HEK293T (cell line): ENCODE measurements at regions of chr5 and their contacts with region 1.

Region 1: DNA sequence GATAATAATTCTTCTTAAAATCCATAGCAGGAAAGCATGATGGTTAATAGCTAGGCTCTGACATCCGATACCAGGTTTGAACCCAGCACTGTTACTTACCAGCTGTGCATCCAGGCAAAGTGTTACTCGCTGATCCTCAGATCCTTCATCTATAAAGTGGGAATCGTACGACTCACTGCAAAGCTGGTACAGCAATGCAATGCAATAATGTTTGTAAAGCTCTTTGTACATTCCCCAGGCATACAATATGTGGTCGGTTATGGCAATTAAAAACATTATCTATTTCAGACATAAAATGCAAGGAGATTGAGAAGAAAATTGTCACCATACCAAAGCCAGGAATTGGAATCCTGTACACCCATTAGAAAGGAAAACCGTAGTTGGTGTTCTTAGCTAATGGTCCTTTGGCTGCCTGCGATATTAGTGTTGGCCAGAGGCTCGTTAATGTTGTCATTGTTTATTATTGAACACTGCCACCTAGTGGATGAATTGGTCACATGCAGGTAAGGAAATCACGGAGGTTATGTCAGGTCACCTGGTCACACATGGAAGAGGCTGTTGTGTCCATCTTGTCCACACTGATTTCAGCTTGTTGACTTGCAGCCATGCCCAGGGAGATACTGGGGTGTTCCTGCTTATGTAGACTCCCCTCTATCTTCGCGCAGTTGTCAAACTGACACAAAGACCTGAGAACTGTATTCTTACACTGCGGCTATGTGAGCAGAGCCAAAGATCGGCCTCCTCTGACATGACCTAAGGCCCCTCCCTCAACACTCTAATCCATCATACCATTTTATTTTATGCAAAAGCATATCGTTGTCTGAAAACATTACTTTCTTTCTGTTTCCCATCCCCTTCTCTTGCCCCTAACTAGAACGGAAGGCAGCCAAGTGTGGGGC is 87.5 kb upstream of the PPP2R2B start:
- DNase-seq: peak; percentile 68

Region 2: DNA sequence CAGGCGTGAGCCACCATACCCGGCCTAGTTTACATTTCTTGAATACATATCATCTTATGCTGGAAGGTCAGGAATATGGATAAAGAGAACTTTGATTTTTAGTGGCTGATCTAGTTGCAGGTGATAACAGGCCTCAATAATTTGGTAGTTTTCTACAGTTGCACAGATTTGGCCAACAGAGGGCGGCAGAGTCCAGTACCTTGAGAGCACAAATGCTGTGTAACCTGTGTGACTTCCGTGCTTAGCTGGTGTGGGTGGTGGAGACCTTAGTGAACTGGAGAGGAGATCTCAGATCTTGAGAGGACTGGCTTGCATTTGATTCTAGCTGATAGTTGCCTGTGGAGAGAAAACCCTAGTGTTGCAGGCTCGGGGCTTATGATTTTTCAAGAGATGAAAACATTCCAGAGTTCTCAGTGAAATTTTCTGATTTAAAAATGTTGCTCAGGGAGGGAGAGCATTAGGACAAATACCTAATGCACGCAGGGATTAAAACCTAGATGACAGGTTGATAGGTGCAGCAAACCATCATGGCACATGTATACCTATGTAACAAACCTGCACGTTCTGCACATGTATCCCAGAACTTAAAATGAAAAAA is 432.7 kb before region 1 on chr5:
- CTCF ChIA-PET with region 1: interaction called, 22 read pairs
- POLR2A ChIA-PET with region 1: no interaction called
- DNase-seq: peak; percentile 72

Region 3: GRCh38 chr5:146541958-146542849 is 423.8 kb before region 1 on chr5:
- CTCF ChIA-PET with region 1: interaction called, 26 read pairs
- POLR2A ChIA-PET with region 1: no interaction called
- DNase-seq: peak; percentile 73

Region 4: DNA sequence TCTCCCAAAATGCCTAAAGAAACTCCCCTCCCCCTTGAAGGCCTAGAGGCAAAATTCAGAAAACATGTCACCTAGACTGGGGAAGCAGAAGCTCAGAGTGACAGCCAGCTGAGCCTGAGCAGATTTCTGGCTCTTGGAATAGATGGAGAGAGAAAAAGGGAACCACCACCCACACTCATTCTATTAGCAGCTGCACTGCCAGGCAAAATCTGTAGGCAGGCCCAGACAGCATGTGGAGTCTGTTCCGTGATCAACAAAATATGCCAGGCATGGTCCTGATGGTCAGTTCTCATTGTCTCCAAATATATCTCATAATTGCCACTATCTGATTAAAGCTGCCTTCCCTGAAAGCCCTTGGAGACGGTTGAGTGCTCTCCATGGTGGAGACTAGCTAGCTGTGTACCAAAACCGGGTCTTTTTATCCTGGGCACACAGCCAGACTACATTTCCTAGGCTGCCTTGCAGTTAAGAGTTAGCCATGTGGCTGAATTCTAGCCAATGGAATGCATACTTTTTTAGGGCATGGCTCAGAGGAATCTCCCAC is 318.3 kb before region 1 on chr5:
- CTCF ChIA-PET with region 1: no interaction called
- POLR2A ChIA-PET with region 1: no interaction called
- DNase-seq: no peak

Region 5: DNA sequence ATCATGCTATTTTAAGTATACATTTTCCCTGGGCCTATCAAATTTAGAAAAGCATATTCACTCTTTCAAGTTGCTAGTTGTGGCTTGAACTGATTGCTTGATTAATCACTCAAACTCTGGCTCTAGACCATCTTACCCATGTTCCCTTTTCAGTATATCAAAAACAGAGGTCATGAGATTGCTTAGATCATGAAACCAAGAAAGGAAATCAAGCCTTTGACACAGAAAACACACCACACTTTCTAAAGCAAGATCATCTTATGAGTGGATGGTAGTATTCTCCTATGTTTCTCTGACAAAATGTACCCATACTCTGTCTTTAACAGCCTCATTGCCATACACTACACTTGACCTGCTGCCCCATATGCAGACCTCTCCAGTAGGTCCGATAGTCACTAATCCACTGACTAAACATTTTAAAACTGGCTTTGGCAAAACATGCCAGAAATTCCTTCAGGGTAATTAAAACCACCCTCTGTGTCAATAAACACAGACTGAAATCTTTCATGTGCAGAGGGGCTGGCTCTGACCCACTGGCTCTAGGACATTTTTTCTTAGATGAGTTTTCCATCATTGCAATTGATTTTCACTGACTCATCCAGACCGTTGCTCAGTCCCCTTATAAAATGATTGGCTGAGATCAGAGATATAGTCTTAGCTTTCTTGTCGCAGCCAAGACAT is 105.7 kb before region 1 on chr5:
- CTCF ChIA-PET with region 1: no interaction called
- POLR2A ChIA-PET with region 1: no interaction called
- DNase-seq: no peak